Activated naive CD4-positive, alpha-beta T cell treated with anti-CD3 and anti-CD28 coated beads for 36 hours (primary cell): ENCODE measurements at regions of chr17 and their contacts with region 1.

Region 1: DNA sequence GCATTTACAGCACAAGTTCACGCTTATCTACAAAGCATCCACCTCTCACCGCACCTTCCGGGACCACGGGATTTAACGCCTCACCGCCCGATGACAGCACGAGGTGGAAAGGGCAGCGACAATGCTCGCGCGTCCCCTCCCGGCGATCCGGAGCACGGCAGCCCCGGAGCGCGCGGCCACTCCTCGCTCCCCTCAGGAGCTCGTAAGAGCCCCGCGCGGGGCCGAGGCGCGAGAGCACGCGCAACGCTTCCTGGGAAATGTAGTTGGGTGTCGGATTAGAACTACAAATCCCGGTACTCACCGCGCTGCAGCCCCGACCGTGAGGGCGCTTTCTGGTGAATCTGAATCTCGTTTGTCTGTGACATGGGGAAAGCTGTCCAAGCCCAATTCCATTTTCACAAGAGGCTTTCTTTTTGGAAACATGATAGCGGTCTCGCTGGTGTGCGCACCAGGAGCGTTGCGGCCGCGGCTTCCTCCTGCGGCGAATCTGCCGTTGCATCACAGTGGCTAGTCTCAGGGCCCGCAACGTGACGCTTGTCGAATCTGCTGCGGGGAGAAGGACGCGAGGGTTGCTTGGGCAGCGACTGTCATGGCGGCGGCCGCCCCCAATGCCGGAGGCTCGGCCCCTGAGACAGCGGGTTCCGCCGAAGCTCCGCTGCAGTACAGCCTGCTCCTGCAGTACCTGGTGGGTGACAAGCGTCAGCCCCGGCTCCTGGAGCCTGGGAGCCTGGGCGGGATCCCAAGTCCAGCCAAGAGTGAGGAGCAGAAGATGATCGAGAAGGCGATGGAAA is at the start of gene TIMM22:
- DNase-seq: peak; percentile 95
- H3K4me3 Mint-ChIP-seq: peak within 1 kb of the TSS; percentile 90
- H3K27ac Mint-ChIP-seq: peak within 1 kb of the TSS; percentile 96
- H3K4me1 Mint-ChIP-seq: peaks cover 26% of the 10 kb centered on the region
- H3K27me3 Mint-ChIP-seq: no peaks in the 10 kb centered on the region
- total RNA-seq, gene TIMM22: 7.3 to 7.4 TPM

Region 2: GRCh38 chr17:781805-782731 is 214.7 kb before region 1 on chr17 and contains the starts of genes GLOD4 and MRM3:
- CTCF ChIA-PET with region 1: interaction called, 5 read pairs
- intact Hi-C with region 1: loop called (anchors 1 kb)
- DNase-seq: peak; percentile 95
- H3K4me3 Mint-ChIP-seq: peak within 1 kb of the TSS; percentile 89
- H3K27ac Mint-ChIP-seq: peak within 1 kb of the TSS; percentile 93
- H3K4me1 Mint-ChIP-seq: peaks cover 35% of the 10 kb centered on the region
- H3K27me3 Mint-ChIP-seq: no peaks in the 10 kb centered on the region
- total RNA-seq, gene GLOD4: 61.1 to 63.7 TPM
- total RNA-seq, gene MRM3: 22.8 to 25.6 TPM

Region 3: DNA sequence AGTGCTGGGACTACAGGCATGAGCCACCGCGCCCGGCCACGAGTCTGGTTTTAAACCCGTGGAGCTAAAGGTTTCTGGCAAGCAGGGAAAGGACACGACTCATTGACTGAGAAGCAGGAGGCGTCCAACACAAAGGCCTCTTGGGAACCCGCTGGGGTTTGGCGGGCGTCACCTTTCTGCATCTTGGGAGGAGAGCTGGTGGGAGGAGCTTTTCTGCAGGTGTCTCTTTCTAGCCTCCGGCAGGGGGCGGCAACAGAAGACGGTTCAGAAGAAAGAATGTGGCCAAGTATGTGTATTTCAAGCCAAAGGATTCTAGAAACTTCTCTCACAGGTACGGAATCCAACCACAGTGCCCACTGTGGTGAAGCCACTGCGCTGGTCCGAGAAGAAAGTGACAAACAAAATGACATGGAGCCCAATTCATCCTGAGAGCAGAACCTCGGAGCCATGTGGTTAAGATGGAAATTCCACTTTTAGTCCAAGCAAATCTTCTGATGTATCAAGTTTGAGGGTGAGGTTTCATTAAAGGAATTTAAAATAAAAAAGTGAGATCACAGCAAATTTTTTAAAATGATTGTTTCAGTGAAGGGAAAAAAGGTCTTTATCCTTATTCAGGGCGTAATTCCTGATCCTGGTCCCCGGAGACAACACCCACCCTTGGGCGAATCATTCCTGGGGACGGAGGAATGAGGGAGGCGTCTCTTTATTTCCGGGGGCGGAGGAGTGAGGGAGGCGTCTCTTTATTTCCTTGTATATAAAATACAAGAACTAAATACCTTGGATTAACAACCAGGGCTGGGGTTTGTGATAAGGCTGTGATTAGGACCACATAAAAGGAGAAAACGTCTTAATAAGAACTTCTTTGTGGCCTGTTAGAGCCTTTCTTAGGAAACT is 117.0 kb before region 1 on chr17:
- CTCF ChIA-PET with region 1: interaction called, 5 read pairs
- intact Hi-C with region 1: loop called (anchors 1 kb)
- DNase-seq: peak; percentile 76
- H3K4me3 Mint-ChIP-seq: no peak overlapping the region
- H3K27ac Mint-ChIP-seq: no peak overlapping the region
- H3K4me1 Mint-ChIP-seq: peaks cover 7% of the 10 kb centered on the region
- H3K27me3 Mint-ChIP-seq: peaks cover 11% of the 10 kb centered on the region

Region 4: DNA sequence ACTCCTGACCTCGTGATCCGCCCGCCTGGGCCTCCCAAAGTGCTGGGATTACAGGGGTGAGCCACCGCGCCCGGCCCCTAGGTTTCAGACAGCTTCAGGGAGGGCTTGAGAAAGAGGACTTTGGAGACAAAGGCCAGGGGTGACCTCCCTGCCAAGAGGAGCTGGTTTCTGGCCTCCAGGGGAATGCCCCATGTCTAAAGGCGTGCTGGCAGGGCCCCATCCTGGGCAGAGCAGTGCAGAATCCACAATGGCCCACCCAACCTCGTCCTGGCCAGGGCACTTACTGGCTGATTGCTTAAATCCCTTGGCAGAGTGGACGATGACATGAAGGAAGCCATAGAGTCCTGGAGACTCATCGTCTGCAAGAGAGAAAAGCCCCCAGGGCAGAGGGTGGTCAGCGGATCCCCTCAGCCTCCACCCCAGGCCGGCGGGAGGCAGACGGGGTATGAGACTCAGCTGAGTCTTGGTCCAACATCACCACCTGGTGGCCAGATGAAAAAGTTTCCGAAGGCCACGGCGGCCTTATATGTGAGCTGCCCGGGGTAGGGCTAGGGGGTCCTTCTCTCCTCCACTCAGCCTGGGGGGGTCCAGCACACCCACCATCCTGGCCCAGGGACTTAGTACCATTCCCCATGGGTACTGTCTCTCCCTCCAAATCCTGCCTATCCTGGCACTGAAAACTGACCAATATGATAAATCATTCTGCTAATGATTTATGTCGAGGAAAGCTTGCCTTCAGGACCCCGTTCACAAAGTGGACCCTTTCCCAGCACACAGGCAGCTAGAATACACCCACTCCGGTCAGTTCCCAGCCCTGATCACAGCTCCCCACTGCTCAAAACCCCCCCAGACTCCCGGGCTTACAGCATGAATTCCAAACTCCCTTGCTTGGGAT is 59.2 kb after region 1 on chr17:
- CTCF ChIA-PET with region 1: interaction called, 3 read pairs
- intact Hi-C with region 1: loop called (anchors 2 kb)
- DNase-seq: peak; percentile 64
- H3K4me3 Mint-ChIP-seq: no peak overlapping the region
- H3K27ac Mint-ChIP-seq: no peak overlapping the region
- H3K4me1 Mint-ChIP-seq: no peaks in the 10 kb centered on the region
- H3K27me3 Mint-ChIP-seq: no peaks in the 10 kb centered on the region